Dorsolateral prefrontal cortex (tissue), 120 donors: ENCODE measurements at regions of chr5 and their contacts with region 1.

Region 1: DNA sequence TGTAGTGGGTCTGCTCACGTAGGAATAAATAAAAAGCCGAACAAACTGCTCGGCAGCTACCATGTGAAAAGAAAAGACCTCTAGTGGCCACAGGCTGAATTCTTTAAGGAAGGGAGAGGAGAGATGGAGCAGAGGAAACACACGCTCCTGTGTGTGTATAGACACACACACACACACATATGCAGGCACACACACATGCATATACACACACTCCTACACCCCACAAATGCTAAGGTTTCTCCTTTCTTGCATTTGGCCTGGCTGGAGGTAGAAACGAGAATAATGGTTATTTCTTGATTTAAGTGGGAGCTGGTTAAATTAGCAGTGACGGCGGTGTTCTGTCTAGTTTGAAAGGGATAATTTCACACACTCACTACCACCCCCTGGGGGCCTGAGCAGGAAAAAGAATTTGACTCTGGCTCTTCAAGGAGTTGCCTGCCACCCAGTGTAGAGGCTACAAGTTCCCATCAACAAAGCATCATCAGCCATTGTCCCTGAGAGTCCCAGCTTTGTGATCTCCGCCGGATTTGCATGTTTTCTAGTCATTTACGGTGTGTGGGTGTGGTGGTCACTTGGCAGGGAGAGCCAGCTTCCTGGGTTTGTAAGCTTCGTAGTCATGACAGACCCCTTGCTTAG is at the start of gene INSYN2B:
- DNase-seq: peak; percentile 45 to 95 (median 86)
- H3K4me3 ChIP-seq: peak within 1 kb of the TSS; percentile 29 to 81 (median 62)
- H3K27ac ChIP-seq: peak within 1 kb of the TSS in 54 of 59 donors; percentile 18 to 89 (median 68)
- H3K27me3 ChIP-seq: no peaks in the 10 kb centered on the region
- CTCF ChIP-seq: peak; percentile 65 to 97 (median 86)
- total RNA-seq, gene INSYN2B: 3.2 to 17.3 (median 6.9) TPM

Region 2: DNA sequence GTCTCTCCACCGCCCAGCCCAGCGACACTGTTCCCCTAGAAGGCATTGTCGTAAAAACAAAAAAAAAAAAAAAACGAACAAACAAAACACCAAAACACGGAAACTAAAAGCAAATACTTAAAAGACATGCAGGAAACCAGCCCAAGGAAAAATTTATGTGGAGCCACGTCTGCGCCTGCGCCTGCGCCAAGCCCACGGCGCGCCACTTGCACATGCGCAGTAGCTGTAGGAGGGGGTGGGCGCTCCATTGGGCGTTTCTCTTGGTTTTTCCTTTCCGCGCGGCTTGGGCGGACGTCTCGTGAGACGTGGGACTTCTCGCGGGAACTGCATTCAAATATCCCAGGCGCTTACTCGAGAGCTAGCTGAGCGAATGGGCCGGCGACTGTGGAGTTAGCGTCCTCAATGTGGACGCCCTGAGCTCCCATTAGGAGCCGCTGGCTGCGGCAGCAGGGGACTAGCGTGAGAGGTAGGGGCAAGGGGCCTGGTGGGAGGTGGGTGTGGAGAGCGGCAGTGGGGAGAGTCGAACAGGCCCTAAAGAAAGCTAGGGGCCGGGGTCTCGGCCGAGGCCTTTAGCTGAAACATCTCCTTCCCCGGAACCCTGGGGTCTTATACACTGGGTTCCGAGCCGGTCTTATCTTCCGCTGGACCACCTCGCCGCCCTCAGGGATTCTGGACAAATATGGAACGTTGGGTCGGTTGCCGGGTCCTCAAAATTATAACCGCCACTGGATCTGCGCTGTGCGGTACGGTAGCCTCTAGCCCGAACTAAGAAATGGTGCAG is 396.9 kb before region 1 on chr5 and contains the start of gene SPDL1:
- intact Hi-C with region 1: loop called in 1 of 2 experiments (anchors 10 kb)
- DNase-seq: peak; percentile 85 to 97 (median 93)
- H3K4me3 ChIP-seq: peak within 1 kb of the TSS; percentile 58 to 97 (median 87)
- H3K27ac ChIP-seq: peak within 1 kb of the TSS in 52 of 59 donors; percentile 2 to 89 (median 70)
- H3K27me3 ChIP-seq: no peaks in the 10 kb centered on the region
- CTCF ChIP-seq: peak in 41 of 56 donors; percentile 7 to 68 (median 36)
- total RNA-seq, gene SPDL1: 6.4 to 23.1 (median 14.0) TPM

Region 3: GRCh38 chr5:169805527-169805934 is 175.0 kb before region 1 on chr5:
- intact Hi-C with region 1: loop called in 1 of 2 experiments (anchors 10 kb)
- DNase-seq: peak in 1 of 10 donors; percentile 60
- H3K4me3 ChIP-seq: no peak overlapping the region
- H3K27ac ChIP-seq: no peak overlapping the region
- H3K27me3 ChIP-seq: peaks cover 0 to 3% (median 0%) of the 10 kb centered on the region in 45 donors
- CTCF ChIP-seq: no peak

Region 4: GRCh38 chr5:169895926-169896325 is 84.6 kb before region 1 on chr5:
- intact Hi-C with region 1: loop called in 1 of 2 experiments (anchors 1 kb)
- DNase-seq: peak; percentile 25 to 95 (median 88)
- H3K4me3 ChIP-seq: peak overlapping the region in 23 of 59 donors; percentile 2 to 51 (median 20)
- H3K27ac ChIP-seq: peak overlapping the region; percentile 5 to 96 (median 85)
- H3K27me3 ChIP-seq: no peaks in the 10 kb centered on the region
- CTCF ChIP-seq: peak in 1 of 56 donors; percentile 7

Region 5: GRCh38 chr5:170070556-170071412 is 90.2 kb after region 1 on chr5:
- intact Hi-C with region 1: loop called in 1 of 2 experiments (anchors 2 kb)
- DNase-seq: peak in 7 of 10 donors; percentile 17 to 67 (median 56)
- H3K4me3 ChIP-seq: no peak overlapping the region
- H3K27ac ChIP-seq: peak overlapping the region in 19 of 59 donors; percentile 0 to 54 (median 42)
- H3K27me3 ChIP-seq: no peaks in the 10 kb centered on the region
- CTCF ChIP-seq: peak; percentile 22 to 78 (median 66)